ENCODE measurements at regions of chr4 and their contacts with region 1.

Region 1: DNA sequence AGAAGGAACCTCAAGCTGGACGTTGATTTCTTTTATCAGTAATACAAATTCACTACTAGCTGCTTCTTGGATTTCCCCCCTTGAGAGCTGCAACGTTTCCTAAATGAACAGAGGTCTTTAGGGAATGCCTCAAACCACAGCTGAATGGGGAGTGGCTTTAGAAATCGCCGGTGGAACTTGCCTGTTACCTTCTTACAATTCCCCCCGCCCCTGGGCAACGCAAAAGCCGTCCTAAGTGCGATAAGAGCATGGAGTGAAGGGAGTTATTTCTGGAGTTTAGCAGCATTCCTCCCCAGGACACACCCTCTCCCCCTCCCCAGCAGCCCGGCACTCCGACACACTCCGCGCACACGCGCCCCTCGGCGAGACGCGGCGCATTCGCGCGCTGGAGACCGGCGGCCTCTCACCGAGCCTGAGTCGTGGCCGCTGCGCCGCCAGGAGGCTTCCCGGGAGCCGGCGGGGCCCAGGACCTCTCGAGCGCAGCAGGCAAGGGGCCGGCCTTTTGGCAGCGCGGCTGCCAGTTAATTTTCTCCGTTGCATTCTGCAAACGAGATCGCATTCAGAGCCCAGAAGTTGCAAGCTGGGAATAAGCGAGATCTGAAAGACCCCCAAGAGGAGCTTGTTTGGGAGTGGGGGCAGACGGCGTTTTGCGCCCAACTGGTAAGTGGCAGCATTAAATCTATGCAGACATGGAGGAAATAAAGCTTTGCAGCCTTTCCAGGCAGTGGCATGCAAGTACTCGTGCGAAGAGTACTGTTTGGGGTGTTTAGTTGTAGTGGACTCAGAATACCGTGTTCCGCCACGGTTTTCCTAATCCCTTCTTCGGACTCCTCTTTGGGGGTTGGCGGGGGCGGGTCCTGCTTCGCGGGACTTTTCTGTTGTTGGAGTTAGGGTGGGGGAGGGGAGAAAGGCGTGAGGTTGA is 134.7 kb downstream of the PALLD start:
- DNase-seq: peak; percentile 66 to 78
- H3K4me3 ChIP-seq: peak overlapping the region; percentile 92
- H3K27ac ChIP-seq: peak overlapping the region; percentile 75
- H3K4me1 ChIP-seq: peaks cover 57% of the 10 kb centered on the region
- H3K27me3 ChIP-seq: no peaks in the 10 kb centered on the region
- CTCF ChIP-seq: no peak; the same call in 1 of the 2 replicates

Region 2: GRCh38 chr4:168486961-168487305 is 144.6 kb before region 1 on chr4:
- CTCF ChIA-PET with region 1: no interaction called
- POLR2A ChIA-PET with region 1: no interaction called
- intact Hi-C with region 1: loop called (anchors 5 kb)
- DNase-seq: peak in 1 of 2 experiments; percentile 78
- H3K4me3 ChIP-seq: peak overlapping the region; percentile 23; the same call in 1 of the 2 replicates
- H3K27ac ChIP-seq: peak overlapping the region; percentile 92
- H3K4me1 ChIP-seq: peaks cover 55% of the 10 kb centered on the region
- H3K27me3 ChIP-seq: no peaks in the 10 kb centered on the region
- CTCF ChIP-seq: no peak

Region 3: DNA sequence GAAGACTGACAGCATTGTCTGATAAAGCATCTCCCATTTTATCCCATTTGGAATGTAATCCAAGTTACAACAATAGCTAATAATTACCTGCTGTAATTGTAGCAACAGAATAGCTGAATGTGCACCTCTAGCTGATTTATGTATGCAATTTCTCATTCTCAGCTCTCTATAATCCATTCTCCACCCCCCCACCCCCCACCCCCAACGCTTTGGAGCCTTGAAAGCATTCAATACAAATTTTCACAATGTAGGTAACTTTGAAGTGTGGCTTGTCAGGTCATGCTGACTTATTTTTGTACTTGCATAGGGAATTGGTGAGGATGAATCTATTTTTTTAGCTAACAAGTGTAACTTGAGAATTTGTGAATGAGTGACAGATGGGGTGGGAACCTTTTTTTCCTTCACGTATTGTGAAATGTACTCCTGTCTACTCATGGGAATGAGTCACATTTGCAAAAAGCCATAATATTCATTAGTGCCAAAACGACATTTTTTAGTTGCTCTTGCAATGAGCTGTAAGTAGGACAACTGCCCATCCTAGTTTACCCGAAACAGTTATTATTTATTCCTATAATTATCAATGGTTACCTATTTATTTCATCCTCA is 24.7 kb after region 1 on chr4:
- CTCF ChIA-PET with region 1: no interaction called
- POLR2A ChIA-PET with region 1: no interaction called
- intact Hi-C with region 1: loop called (anchors 1 kb)
- DNase-seq: peak in 1 of 2 experiments; percentile 85
- H3K4me3 ChIP-seq: peak overlapping the region; percentile 53; the same call in 1 of the 2 replicates
- H3K27ac ChIP-seq: peak overlapping the region; percentile 73
- H3K4me1 ChIP-seq: peaks cover 35% of the 10 kb centered on the region
- H3K27me3 ChIP-seq: no peaks in the 10 kb centered on the region
- CTCF ChIP-seq: no peak

Region 4: DNA sequence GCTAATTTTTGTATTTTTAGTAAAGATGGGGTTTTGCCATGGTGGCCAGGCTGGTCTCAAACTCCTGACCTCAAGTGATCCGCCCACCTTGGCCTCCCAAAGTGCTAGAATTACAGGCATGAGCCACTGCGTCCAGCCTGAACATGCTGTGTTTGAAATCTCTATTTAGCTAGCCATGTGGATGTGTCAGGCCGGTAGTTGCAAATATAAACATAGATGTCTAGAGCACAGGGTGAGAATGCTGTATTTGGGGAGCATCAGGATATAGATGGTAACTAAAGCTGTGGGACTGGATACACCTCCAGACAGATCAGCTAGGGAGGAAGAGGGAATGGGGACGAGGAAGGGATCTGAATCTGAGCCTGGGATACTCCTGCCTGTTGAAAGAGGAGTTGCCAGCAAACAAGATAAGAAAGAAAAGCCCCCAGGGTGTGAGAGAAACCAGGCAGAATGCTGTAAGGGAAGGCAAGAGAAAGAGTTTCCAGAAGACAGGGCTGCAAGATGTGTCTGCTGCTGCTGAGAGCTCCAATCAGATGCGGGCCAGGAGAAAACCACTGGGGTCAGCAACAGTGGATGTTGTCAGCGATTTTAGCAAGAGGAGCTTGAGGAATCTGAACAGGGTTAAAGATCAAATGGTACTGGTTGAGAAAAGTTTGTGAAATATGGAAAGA is 42.7 kb after region 1 on chr4:
- CTCF ChIA-PET with region 1: no interaction called
- POLR2A ChIA-PET with region 1: no interaction called
- intact Hi-C with region 1: no loop called
- DNase-seq: no peak
- H3K4me3 ChIP-seq: no peak overlapping the region
- H3K27ac ChIP-seq: no peak overlapping the region
- H3K4me1 ChIP-seq: no peaks in the 10 kb centered on the region
- H3K27me3 ChIP-seq: no peaks in the 10 kb centered on the region
- CTCF ChIP-seq: no peak

Region 5: DNA sequence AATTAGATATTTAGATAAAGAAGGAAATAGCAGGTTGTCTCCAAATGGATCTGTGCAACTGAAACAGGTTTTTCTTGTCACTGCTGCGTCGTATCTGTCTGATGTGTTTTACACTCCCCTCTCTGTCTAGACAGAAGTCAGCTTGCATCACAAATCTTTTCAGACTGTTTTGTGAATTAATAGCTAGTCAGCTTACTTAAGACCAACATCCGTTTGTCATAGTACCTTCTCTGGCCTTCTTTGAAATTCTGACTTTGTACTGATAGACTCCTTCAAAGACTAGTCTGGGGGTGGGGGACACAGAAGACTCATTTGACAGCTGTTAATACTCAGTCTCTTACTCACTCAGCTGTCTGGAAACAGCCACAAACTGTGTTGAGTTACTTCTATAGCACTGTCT is 63.1 kb after region 1 on chr4:
- CTCF ChIA-PET with region 1: no interaction called
- POLR2A ChIA-PET with region 1: no interaction called
- intact Hi-C with region 1: loop called (anchors 5 kb)
- DNase-seq: peak in 1 of 2 experiments; percentile 60
- H3K4me3 ChIP-seq: no peak overlapping the region
- H3K27ac ChIP-seq: peak overlapping the region; percentile 37
- H3K4me1 ChIP-seq: peaks cover 13% of the 10 kb centered on the region
- H3K27me3 ChIP-seq: no peaks in the 10 kb centered on the region
- CTCF ChIP-seq: no peak

Region 6: GRCh38 chr4:168797176-168797575 is 165.7 kb after region 1 on chr4:
- CTCF ChIA-PET with region 1: no interaction called
- POLR2A ChIA-PET with region 1: no interaction called
- intact Hi-C with region 1: loop called (anchors 10 kb)
- DNase-seq: peak in 1 of 2 experiments; percentile 62
- H3K4me3 ChIP-seq: no peak overlapping the region; the same call in 1 of the 2 replicates
- H3K27ac ChIP-seq: peak overlapping the region; percentile 56
- H3K4me1 ChIP-seq: peaks cover 25% of the 10 kb centered on the region
- H3K27me3 ChIP-seq: no peaks in the 10 kb centered on the region
- CTCF ChIP-seq: no peak

Region 7: GRCh38 chr4:168877511-168878491 is 246.3 kb after region 1 on chr4:
- CTCF ChIA-PET with region 1: no interaction called
- POLR2A ChIA-PET with region 1: no interaction called
- intact Hi-C with region 1: loop called (anchors 5 kb)
- DNase-seq: peak in 1 of 2 experiments; percentile 49
- H3K4me3 ChIP-seq: no peak overlapping the region
- H3K27ac ChIP-seq: no peak overlapping the region
- H3K4me1 ChIP-seq: no peaks in the 10 kb centered on the region
- H3K27me3 ChIP-seq: no peaks in the 10 kb centered on the region
- CTCF ChIP-seq: no peak

Measured in PC-9 (cell line).